MCF 10A (cell line): ENCODE measurements at regions of chr1 and their contacts with region 1.

Region 1: GRCh38 chr1:204565617-204566582 is 49.7 kb downstream of the MDM4 start:
- DNase-seq: peak; percentile 91
- H3K4me3 Mint-ChIP-seq: no peak overlapping the region
- H3K27ac Mint-ChIP-seq: no peak overlapping the region
- H3K4me1 Mint-ChIP-seq: peaks cover 9% of the 10 kb centered on the region
- H3K27me3 Mint-ChIP-seq: no peaks in the 10 kb centered on the region
- CTCF ChIP-seq: peak; percentile 95

Region 2: DNA sequence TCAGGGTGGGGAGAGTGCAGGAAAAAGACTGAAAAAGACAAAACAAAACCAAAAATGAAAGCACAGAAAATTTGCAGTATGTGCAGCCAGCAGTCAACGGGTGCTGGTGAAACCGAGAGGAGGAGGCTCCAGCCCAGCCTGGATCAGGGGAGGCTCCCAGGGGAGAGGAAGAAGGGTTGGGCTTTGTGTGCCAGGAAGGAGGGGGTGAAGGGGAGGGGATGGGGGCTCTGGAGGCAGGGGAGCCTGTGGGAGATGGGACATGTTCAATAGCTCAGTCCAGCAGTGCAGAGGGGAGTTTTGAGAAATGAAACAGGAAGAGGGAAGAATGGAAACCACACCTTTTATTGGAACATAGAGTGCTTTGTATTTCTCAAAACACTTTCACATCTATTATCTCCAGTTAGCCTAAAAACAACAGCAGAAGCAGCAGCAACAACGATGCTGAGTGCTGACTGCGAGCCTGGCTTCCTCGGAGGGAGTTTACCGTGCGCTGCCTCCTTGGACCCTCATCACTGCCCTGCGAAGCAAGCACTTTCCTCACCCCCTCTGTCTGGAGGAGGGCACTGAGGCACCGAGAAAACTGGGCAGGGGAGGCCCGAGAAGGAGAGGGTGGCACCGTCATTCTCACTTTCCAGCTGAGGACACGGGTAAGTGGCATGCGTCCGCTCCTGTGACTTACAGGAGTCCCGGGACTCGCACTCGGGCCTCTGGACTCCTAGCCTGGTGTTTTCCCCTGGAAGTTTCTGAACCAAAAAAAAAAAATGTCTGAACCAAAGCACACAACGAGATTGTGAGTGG is 13.2 kb after region 1 on chr1:
- CTCF ChIA-PET with region 1: interaction called, 42 read pairs
- POLR2A ChIA-PET with region 1: interaction called, 3 read pairs
- intact Hi-C with region 1: no loop called
- DNase-seq: no peak
- H3K4me3 Mint-ChIP-seq: no peak overlapping the region
- H3K27ac Mint-ChIP-seq: no peak overlapping the region
- H3K4me1 Mint-ChIP-seq: peaks cover 5% of the 10 kb centered on the region
- H3K27me3 Mint-ChIP-seq: peaks cover 8% of the 10 kb centered on the region
- CTCF ChIP-seq: no peak

Region 3: GRCh38 chr1:204660509-204660908 is 94.6 kb after region 1 on chr1:
- CTCF ChIA-PET with region 1: no interaction called
- POLR2A ChIA-PET with region 1: no interaction called
- intact Hi-C with region 1: no loop called
- DNase-seq: no peak
- H3K4me3 Mint-ChIP-seq: no peak overlapping the region
- H3K27ac Mint-ChIP-seq: no peak overlapping the region
- H3K4me1 Mint-ChIP-seq: no peaks in the 10 kb centered on the region
- H3K27me3 Mint-ChIP-seq: peaks cover 77% of the 10 kb centered on the region
- CTCF ChIP-seq: no peak

Region 4: DNA sequence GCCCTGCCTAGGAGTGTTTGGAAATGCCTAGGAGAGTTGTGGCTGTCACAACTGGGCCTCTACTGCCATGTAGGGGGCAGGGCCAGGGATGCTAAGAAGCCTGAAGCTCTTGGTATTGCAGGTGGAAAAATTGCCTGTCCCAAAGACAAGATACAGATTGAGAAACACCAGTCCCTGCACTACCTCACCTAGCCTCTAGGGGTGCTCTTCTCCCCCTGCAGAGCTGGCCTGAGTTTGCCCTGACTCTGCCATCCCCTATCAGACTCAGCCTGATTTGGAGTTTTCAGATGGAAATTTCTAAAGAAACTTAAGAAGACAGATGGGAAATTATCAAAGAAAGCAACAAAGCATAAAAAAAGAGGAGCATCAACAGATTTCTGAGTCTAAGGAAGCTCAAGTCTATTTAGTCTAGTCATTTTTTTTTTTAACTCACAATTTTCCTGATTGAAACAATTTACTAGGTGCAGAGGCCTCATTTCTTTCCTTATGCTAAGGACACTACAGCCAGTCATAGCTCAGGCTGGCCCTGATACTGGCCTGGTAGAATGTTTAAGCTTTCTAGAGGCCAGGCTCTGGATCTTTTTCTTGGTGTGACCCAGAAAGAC is 181.0 kb after region 1 on chr1:
- CTCF ChIA-PET with region 1: interaction called, 14 read pairs
- POLR2A ChIA-PET with region 1: no interaction called
- intact Hi-C with region 1: no loop called
- DNase-seq: peak; percentile 79
- H3K4me3 Mint-ChIP-seq: no peak overlapping the region
- H3K27ac Mint-ChIP-seq: no peak overlapping the region
- H3K4me1 Mint-ChIP-seq: no peaks in the 10 kb centered on the region
- H3K27me3 Mint-ChIP-seq: peaks cover 48% of the 10 kb centered on the region
- CTCF ChIP-seq: peak; percentile 99

Region 5: DNA sequence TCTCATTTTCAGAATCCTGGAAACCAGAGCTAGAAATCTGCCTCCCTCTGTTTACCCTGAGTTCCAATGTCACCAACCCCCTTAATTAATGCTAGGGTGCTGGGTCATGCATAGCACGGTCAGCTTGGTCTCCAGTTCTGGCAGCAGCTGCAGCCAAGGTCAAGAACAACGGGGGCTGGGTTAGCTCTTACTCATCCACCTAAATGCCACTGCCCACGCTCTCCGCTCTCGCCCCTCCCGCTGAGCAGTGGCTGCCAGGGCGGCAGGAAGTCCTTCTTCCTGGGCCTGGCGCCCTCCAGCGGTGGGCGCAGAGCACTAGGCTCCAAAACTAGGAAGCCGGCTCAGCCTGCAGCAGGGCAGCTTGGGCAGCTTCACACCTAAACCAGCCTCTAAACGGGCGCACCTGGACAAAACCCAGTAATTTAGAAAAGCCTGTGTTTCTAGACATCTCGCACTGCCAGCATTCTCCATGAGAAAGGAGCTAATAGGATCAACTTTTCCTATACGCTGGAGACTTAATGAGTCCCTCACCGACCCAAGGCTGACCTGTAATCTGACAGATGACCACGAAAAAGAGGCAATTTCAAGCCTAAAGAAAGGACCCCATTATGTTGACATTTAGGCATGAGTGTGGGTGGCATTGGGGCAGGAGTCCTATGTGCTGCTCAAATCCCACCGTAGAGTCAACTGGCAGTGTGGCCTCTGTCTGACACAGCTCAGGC is 198.0 kb after region 1 on chr1:
- CTCF ChIA-PET with region 1: interaction called, 45 read pairs
- POLR2A ChIA-PET with region 1: interaction called, 5 read pairs
- intact Hi-C with region 1: loop called (anchors 1 kb)
- DNase-seq: peak; percentile 94
- H3K4me3 Mint-ChIP-seq: no peak overlapping the region
- H3K27ac Mint-ChIP-seq: no peak overlapping the region
- H3K4me1 Mint-ChIP-seq: peaks cover 11% of the 10 kb centered on the region
- H3K27me3 Mint-ChIP-seq: peaks cover 57% of the 10 kb centered on the region
- CTCF ChIP-seq: peak; percentile 98

Region 6: GRCh38 chr1:204819495-204819894 is 253.6 kb after region 1 on chr1:
- CTCF ChIA-PET with region 1: interaction called, 10 read pairs
- POLR2A ChIA-PET with region 1: interaction called, 3 read pairs
- intact Hi-C with region 1: no loop called
- DNase-seq: no peak
- H3K4me3 Mint-ChIP-seq: no peak overlapping the region
- H3K27ac Mint-ChIP-seq: no peak overlapping the region
- H3K4me1 Mint-ChIP-seq: no peaks in the 10 kb centered on the region
- H3K27me3 Mint-ChIP-seq: peaks cover 82% of the 10 kb centered on the region
- CTCF ChIP-seq: no peak